PC-9 (cell line): ENCODE measurements at regions of chr18 and their contacts with region 1.

Region 1: GRCh38 chr18:55415258-55415871 is 172.6 kb downstream of the TCF4 start:
- DNase-seq: peak; percentile 33 to 49
- H3K4me3 ChIP-seq: no peak overlapping the region
- H3K27ac ChIP-seq: no peak overlapping the region
- H3K4me1 ChIP-seq: no peaks in the 10 kb centered on the region
- H3K27me3 ChIP-seq: no peaks in the 10 kb centered on the region
- CTCF ChIP-seq: peak; percentile 96

Region 2: GRCh38 chr18:54626779-54627178 is 788.6 kb before region 1 on chr18:
- CTCF ChIA-PET with region 1: no interaction called
- POLR2A ChIA-PET with region 1: no interaction called
- intact Hi-C with region 1: no loop called
- DNase-seq: no peak
- H3K4me3 ChIP-seq: no peak overlapping the region
- H3K27ac ChIP-seq: no peak overlapping the region
- H3K4me1 ChIP-seq: no peaks in the 10 kb centered on the region
- H3K27me3 ChIP-seq: no peaks in the 10 kb centered on the region
- CTCF ChIP-seq: no peak

Region 3: GRCh38 chr18:55234366-55235093 is 180.8 kb before region 1 on chr18:
- CTCF ChIA-PET with region 1: no interaction called
- POLR2A ChIA-PET with region 1: no interaction called
- intact Hi-C with region 1: loop called (anchors 5 kb)
- DNase-seq: peak; percentile 57 to 67
- H3K4me3 ChIP-seq: no peak overlapping the region
- H3K27ac ChIP-seq: no peak overlapping the region
- H3K4me1 ChIP-seq: no peaks in the 10 kb centered on the region
- H3K27me3 ChIP-seq: no peaks in the 10 kb centered on the region
- CTCF ChIP-seq: peak; percentile 84

Region 4: DNA sequence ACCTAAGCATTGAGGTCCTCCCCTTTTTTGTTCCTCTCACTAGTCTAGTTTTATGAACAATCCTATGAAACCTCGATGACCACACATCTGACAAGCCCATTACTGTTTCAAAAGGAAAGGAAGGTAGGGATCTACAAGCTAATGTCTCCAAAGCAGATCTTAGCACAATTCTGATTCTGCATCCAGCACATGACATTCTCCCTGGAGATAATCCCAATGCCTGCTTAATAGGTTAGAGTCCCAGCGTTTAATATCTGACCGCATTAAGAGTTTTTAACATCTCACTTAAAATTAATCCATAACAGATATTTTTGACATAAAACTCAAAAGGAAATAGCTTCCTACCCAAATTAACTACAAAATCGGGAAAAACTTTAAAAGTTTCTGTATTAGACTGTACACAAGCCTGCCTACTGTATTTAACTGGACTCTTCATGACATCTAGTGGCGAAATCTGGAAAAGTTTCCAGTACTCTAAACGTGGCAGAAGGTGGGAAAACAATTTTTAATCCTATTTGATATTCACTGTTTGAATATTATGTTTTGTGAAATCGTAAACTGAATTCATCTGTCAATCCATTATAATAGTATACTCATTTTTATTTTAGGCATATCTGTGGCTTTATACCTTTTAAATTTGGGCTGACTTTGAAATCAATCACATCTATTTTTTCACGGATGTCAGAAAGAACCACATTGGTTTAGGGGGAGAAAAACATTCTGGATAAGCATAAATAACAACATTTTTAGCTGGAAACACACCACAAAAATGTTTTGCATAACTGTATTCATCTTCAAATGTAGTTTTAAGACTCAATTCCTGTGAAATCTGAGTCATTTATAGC is 1160.7 kb after region 1 on chr18:
- CTCF ChIA-PET with region 1: no interaction called
- POLR2A ChIA-PET with region 1: no interaction called
- intact Hi-C with region 1: loop called (anchors 1 kb)
- DNase-seq: no peak
- H3K4me3 ChIP-seq: no peak overlapping the region
- H3K27ac ChIP-seq: no peak overlapping the region
- H3K4me1 ChIP-seq: no peaks in the 10 kb centered on the region
- H3K27me3 ChIP-seq: no peaks in the 10 kb centered on the region
- CTCF ChIP-seq: peak; percentile 86